ENCODE measurements at regions of chr3 and their contacts with region 1.

Region 1: GRCh38 chr3:27312044-27312668 is 57.0 kb downstream of the NEK10 start:
- DNase-seq: peak; percentile 66
- ATAC-seq: peak; percentile 84
- H3K4me3 ChIP-seq: no peak overlapping the region
- H3K27ac ChIP-seq: no peak overlapping the region
- H3K4me1 ChIP-seq: peaks cover 11% of the 10 kb centered on the region
- H3K27me3 ChIP-seq: no peaks in the 10 kb centered on the region
- CTCF ChIP-seq: peak; percentile 83
- EP300 ChIP-seq: no peak
- POLR2A ChIP-seq: no peak
- RAD21 ChIP-seq: peak; percentile 64

Region 2: DNA sequence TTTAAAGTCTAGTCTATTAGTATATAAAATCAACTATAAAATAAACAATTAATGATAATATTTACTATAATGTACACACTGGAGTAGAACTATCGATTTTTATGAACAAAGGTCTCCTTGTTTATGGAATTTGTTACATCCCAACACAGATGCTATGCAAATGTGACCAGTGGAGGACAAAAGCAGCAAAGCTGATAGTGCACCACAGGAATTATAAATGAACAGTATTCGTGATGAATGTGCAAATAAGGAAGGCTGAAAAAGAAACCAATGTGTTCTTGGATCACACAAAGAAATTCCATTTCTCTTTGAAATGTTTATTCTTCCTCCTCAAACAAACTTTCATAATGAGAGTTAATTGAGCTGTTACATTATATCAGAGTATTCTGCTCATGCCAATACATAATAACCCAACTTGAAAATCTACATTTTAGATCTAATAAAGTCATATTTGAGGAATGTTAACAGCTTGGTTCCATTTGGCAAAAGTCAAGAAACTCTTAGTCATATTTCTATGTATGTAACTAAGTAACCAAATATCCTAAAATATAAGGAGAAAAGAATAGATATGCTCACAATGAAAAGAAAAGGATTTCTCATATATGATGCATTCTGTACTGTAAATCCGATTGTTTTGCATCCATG is 22.3 kb before region 1 on chr3:
- CTCF ChIA-PET with region 1: no interaction called
- POLR2A ChIA-PET with region 1: no interaction called
- in situ Hi-C with region 1: no loop called
- intact Hi-C with region 1: no loop called
- DNase-seq: no peak
- ATAC-seq: no peak
- H3K4me3 ChIP-seq: no peak overlapping the region
- H3K27ac ChIP-seq: no peak overlapping the region
- H3K4me1 ChIP-seq: no peaks in the 10 kb centered on the region
- H3K27me3 ChIP-seq: no peaks in the 10 kb centered on the region
- CTCF ChIP-seq: no peak
- EP300 ChIP-seq: no peak
- POLR2A ChIP-seq: no peak
- RAD21 ChIP-seq: no peak

Region 3: DNA sequence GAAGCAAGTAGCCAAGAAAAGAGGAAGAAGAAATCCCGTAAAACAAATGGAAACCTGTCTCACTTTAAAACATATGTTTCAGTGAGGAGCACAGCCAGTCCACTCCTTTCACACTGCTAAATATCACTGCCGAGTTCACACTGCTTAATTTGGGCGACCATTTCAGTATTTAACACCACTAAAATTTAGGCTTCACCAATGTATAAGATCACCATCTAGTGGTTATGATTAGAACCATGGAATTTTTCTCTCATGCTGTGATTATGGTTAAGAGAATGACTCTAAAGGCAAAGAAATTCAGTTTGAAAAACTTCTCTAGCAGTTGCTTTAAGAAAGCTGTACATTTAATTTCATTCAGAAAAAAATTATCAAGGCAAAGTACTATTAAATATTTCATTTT is 155.4 kb after region 1 on chr3:
- CTCF ChIA-PET with region 1: interaction called, 5 read pairs
- POLR2A ChIA-PET with region 1: no interaction called
- in situ Hi-C with region 1: no loop called
- intact Hi-C with region 1: loop called (anchors 1 kb)
- DNase-seq: peak; percentile 28
- ATAC-seq: peak; percentile 63
- H3K4me3 ChIP-seq: no peak overlapping the region
- H3K27ac ChIP-seq: no peak overlapping the region
- H3K4me1 ChIP-seq: no peaks in the 10 kb centered on the region
- H3K27me3 ChIP-seq: no peaks in the 10 kb centered on the region
- CTCF ChIP-seq: peak; percentile 60
- EP300 ChIP-seq: no peak
- POLR2A ChIP-seq: no peak
- RAD21 ChIP-seq: 0 out of 2 replicates have a peak, but pooled peaks have one; percentile 30

Region 4: DNA sequence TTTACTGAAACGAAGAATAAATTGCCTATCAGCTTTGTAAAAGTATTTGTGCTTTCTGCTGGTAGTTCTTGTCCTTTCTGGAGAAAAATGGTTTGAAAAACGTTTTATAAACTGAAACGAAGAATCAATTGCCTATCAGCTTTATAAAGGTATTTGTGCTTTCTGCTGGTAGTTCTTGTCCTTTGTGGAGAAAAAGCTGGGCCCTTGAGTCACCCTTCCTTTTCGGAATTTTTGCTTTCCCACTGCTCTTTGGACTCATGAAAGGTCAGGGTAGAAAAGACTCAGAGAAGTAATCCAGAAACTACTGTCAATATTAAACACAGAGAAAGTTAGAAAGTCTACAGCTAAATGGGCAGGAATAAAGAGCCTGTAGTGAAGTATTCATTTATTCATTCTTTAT is 337.1 kb after region 1 on chr3:
- CTCF ChIA-PET with region 1: no interaction called
- POLR2A ChIA-PET with region 1: no interaction called
- in situ Hi-C with region 1: no loop called
- intact Hi-C with region 1: no loop called
- DNase-seq: no peak
- ATAC-seq: no peak
- H3K4me3 ChIP-seq: no peak overlapping the region
- H3K27ac ChIP-seq: no peak overlapping the region
- H3K4me1 ChIP-seq: peaks cover 14% of the 10 kb centered on the region
- H3K27me3 ChIP-seq: no peaks in the 10 kb centered on the region
- CTCF ChIP-seq: no peak
- EP300 ChIP-seq: no peak
- POLR2A ChIP-seq: no peak
- RAD21 ChIP-seq: no peak

Region 5: DNA sequence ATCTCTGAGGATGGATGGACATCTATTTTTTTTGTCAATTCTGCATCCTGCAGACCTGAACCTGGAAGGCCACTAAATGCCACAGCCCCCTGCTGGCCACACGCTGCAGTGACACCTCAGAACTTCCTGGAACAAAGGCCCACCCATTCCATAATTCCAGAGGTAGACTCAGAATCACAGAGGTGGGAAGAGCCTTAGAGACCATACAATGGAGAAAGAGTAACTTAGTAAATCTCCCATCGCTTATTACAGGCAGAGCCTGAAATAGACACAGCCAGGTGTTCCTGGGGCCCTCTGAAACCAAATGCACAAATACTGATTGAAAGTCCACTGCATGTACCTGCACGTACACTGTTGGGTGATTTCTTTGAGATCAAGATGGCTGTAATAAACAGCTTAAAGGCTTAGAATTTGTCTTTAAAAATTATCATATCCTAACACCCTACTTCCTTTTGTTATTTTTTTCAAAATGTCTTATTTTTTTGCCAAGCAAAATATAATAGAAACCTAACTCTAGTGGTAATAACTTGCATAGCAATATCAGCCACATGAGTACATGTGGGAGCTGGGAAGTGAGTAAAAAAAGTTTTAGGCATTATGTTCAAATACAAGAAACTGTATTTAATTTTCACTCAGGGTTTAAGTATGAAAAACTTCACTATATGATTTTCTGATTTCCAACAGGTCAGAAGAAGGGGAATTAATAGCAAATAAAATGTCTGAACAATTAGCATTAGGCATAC is 347.3 kb after region 1 on chr3:
- CTCF ChIA-PET with region 1: interaction called, 5 read pairs
- POLR2A ChIA-PET with region 1: no interaction called
- in situ Hi-C with region 1: no loop called
- intact Hi-C with region 1: loop called (anchors 1 kb)
- DNase-seq: peak; percentile 48
- ATAC-seq: peak; percentile 98
- H3K4me3 ChIP-seq: peak overlapping the region in 1 of 3 experiments; percentile 20; a peak in 2 of 6 replicates
- H3K27ac ChIP-seq: no peak overlapping the region
- H3K4me1 ChIP-seq: no peaks in the 10 kb centered on the region
- H3K27me3 ChIP-seq: no peaks in the 10 kb centered on the region
- CTCF ChIP-seq: peak; percentile 88
- EP300 ChIP-seq: no peak
- POLR2A ChIP-seq: no peak
- RAD21 ChIP-seq: peak; percentile 46; the same call in 1 of the 2 replicates

Region 6: GRCh38 chr3:27681245-27681748 is 369.1 kb after region 1 on chr3:
- CTCF ChIA-PET with region 1: interaction called, 6 read pairs
- POLR2A ChIA-PET with region 1: no interaction called
- in situ Hi-C with region 1: loop called (anchors 5 kb)
- intact Hi-C with region 1: loop called (anchors 1 kb)
- DNase-seq: peak; percentile 74
- ATAC-seq: peak; percentile 69
- H3K4me3 ChIP-seq: peak overlapping the region; percentile 48 to 62 (median 51); a peak in 4 of 6 replicates
- H3K27ac ChIP-seq: peak overlapping the region; percentile 60
- H3K4me1 ChIP-seq: peaks cover 37% of the 10 kb centered on the region
- H3K27me3 ChIP-seq: no peaks in the 10 kb centered on the region
- CTCF ChIP-seq: peak; percentile 69
- EP300 ChIP-seq: no peak
- POLR2A ChIP-seq: no peak
- RAD21 ChIP-seq: peak; percentile 31; the same call in 1 of the 2 replicates

Measured in HepG2 (cell line).